Esophagus muscularis mucosa (tissue), 4 donors: ENCODE measurements at regions of chr12 and their contacts with region 1.

Region 1: DNA sequence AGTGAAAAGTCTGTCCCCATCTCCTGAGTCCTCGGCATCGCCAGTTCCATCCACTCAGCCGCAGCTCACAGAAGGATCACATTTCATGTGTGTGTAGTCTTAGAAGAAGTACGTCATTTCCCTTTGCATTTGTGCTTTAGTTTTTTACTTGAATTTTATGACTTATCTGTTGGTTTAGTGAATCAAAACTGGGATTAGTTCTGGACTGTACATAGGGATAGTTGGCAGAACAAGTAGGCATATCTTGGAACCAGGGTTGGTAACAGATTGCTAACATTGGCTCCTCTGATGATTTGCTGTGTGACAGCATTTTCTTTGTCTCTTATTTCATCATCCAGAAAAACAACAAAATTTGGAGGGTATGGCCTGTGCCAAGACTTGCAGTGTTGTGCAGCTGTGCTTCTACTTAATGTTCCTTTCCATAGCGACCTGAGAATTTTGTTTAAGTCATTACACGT is 69.6 kb upstream of the AEBP2 start:
- DNase-seq: no peak
- H3K4me3 ChIP-seq: no peak overlapping the region
- H3K27ac ChIP-seq: peak overlapping the region in 1 of 4 donors; percentile 5
- H3K4me1 ChIP-seq: peaks cover 0 to 12% (median 8%) of the 10 kb centered on the region in 4 donors
- H3K27me3 ChIP-seq: no peaks in the 10 kb centered on the region
- CTCF ChIP-seq: no peak
- EP300 ChIP-seq: no peak
- POLR2A ChIP-seq: no peak

Region 2: DNA sequence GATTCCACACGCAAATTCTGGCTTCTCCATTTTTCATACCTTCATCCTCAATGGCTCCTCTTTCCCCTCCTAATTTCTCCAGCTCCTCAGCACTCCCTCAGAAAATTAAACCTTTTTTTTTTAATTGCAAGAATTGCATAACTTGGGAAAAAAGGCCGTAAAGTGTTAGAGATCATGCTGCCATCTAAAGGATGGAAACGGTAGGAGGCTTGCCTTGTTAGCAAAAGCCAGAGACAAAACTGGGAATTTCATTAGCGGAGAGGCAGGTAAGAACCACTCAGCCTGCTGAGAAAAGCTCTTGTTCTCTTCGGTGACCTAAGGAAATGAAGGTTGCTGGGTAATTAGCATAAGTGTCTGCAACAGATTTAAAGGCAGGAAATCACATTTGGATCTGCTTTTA is 273.9 kb after region 1 on chr12:
- intact Hi-C with region 1: loop called (anchors 10 kb)
- DNase-seq: peak; percentile 53
- H3K4me3 ChIP-seq: no peak overlapping the region
- H3K27ac ChIP-seq: no peak overlapping the region
- H3K4me1 ChIP-seq: peaks cover 0 to 10% (median 9%) of the 10 kb centered on the region in 4 donors
- H3K27me3 ChIP-seq: no peaks in the 10 kb centered on the region
- CTCF ChIP-seq: peak; percentile 55 to 74 (median 62)
- EP300 ChIP-seq: no peak
- POLR2A ChIP-seq: no peak